ENCODE measurements at regions of chr1 and their contacts with region 1.

Region 1: GRCh38 chr1:64898107-64898845 is 68.1 kb downstream of the JAK1 start:
- DNase-seq: peak; percentile 64 to 89 (median 77)
- H3K4me3 ChIP-seq: no peak overlapping the region
- H3K27ac ChIP-seq: peak overlapping the region; percentile 62 to 68
- H3K4me1 ChIP-seq: peaks cover 13% of the 10 kb centered on the region
- H3K27me3 ChIP-seq: no peaks in the 10 kb centered on the region
- CTCF ChIP-seq: no peak
- EP300 ChIP-seq: peak; percentile 61
- POLR2A ChIP-seq: no peak

Region 2: DNA sequence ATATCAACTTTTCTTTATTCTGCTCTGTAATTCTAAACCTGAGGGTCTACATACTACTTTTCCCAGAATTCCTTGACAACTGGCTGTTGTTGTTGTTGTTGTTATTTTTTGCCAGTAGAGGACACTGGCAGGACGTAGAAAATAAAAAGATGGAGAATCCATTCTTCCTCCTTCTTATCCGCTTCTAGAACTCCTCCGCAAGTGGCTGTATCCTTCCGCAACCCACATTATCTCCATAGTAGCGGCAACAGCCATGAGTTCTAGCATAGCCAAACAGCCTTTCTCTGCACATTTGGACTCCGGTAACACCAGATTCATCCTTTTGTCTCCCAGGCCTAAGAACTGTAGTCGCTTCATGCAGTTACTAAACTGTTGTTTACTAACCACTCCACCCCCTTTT is 519.5 kb before region 1 on chr1:
- intact Hi-C with region 1: no loop called
- DNase-seq: no peak
- H3K4me3 ChIP-seq: no peak overlapping the region
- H3K27ac ChIP-seq: no peak overlapping the region
- H3K4me1 ChIP-seq: no peaks in the 10 kb centered on the region
- H3K27me3 ChIP-seq: no peaks in the 10 kb centered on the region
- CTCF ChIP-seq: no peak
- EP300 ChIP-seq: no peak
- POLR2A ChIP-seq: no peak

Region 3: GRCh38 chr1:64470665-64471217 is 427.5 kb before region 1 on chr1:
- intact Hi-C with region 1: no loop called
- DNase-seq: peak; percentile 39 to 65 (median 61)
- H3K4me3 ChIP-seq: peak overlapping the region; percentile 61
- H3K27ac ChIP-seq: peak overlapping the region; percentile 89 to 91
- H3K4me1 ChIP-seq: peaks cover 9% of the 10 kb centered on the region
- H3K27me3 ChIP-seq: no peaks in the 10 kb centered on the region
- CTCF ChIP-seq: no peak
- EP300 ChIP-seq: no peak
- POLR2A ChIP-seq: no peak

Region 4: GRCh38 chr1:64966158-64966971 is 68.1 kb after region 1 on chr1 and contains the start of gene JAK1:
- intact Hi-C with region 1: loop called in 1 of 4 experiments (anchors 10 kb)
- DNase-seq: peak; percentile 87 to 94 (median 92)
- H3K4me3 ChIP-seq: peak within 1 kb of the TSS; percentile 70
- H3K27ac ChIP-seq: peak within 1 kb of the TSS; percentile 90 to 99
- H3K4me1 ChIP-seq: peaks cover 7% of the 10 kb centered on the region
- H3K27me3 ChIP-seq: no peaks in the 10 kb centered on the region
- CTCF ChIP-seq: peak in 2 of 3 donors; percentile 30 to 32
- EP300 ChIP-seq: no peak
- POLR2A ChIP-seq: peak; percentile 74
- total RNA-seq, gene JAK1: 106 to 169 (median 127) TPM

Measured in ovary (tissue), 10 donors.